ENCODE measurements at regions of chr4 and their contacts with region 1.

Region 1: GRCh38 chr4:82373816-82374625 is at the start of gene HNRNPD:
- DNase-seq: peak; percentile 99
- H3K4me3 ChIP-seq: peak within 1 kb of the TSS; percentile 99
- H3K27ac ChIP-seq: peak within 1 kb of the TSS; percentile 85
- H3K4me1 ChIP-seq: peaks cover 29% of the 10 kb centered on the region
- CTCF ChIP-seq: no peak
- total RNA-seq, gene HNRNPD: 127 and 159 TPM in 2 replicates

Region 2: DNA sequence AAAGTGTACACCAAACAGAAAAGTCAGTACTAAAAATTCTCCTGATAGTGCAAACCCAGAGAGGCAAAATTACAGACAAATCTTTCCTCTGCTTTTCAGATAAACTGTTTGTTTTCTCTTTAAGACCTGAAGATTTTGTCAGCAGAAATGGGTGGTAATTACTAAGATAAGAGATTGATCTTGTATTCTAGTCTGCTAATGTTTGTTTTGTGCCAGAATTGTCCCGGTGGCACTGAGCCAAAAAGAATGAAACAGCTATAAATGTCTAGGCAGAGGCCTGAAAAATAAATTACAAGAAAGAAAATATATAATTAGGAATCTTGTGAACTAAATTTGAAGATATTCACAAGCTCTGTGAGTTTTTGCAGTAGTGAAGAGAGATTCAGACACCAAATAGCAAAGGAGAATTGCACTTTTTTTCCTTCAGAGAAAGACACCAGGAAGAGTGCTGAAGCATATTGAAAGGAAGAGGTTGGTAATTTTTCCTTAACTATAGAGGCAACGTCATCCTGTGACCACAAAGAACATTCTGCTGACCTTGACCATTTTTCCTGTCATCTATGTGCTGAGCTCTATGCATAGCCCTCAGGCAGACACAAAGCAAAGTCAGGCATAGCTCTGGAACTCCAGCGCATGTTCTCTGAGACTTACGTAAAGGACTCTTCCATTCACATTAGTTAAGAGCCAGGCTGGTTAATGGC is 587.8 kb before region 1 on chr4:
- CTCF ChIA-PET with region 1: no interaction called
- POLR2A ChIA-PET with region 1: no interaction called
- intact Hi-C with region 1: no loop called
- DNase-seq: no peak
- H3K4me3 ChIP-seq: no peak overlapping the region
- H3K27ac ChIP-seq: no peak overlapping the region
- H3K4me1 ChIP-seq: no peaks in the 10 kb centered on the region
- CTCF ChIP-seq: no peak

Region 3: DNA sequence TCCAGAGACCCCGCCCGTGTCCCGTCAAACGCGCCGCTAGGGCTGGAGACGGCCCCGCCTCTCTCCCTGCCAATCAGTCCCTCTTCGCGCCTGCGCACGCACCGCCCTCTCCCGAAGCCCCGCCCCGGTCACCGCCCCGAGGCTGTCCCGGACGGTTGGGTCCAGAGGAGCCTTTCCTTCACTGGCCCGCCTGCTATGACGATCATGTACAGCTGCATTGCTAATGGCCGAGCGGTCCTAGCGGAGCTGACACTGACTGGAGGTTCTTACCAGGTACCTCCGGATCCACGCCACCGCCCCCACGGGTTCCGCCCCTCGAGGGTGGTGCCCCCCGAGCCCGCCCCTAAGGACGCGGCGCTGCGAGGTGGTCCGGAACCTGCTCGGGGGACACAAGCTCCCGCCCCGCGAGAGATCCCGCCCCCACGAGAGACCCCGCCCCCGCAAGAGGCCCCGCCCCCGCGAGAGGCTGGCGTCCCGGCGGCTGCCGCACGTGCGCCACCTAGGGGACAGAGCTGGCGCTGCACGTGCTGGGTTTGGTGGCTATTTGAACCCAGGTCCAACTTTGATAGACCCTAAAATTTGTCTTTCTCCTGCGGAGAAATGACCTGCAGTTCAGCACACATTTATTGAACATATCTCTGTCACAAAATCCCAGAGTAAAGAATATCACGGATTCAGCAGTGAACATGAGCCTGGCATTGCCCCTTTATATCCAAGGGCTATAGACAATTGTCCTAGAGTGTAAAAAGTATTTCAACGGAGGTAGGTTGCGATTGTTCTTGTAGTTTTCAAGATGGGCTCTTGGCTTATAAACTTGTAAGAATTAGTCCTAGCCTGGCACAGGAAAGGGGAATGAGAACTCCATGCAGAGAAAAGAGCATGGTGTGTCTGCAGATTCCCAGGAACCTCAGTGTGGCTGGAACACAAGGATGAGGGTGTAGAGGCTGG is 88.9 kb before region 1 on chr4:
- CTCF ChIA-PET with region 1: interaction called, 3 read pairs
- POLR2A ChIA-PET with region 1: no interaction called
- intact Hi-C with region 1: loop called (anchors 5 kb)
- DNase-seq: peak; percentile 99
- H3K4me3 ChIP-seq: peak overlapping the region; percentile 62
- H3K27ac ChIP-seq: peak overlapping the region; percentile 22
- H3K4me1 ChIP-seq: peaks cover 25% of the 10 kb centered on the region
- CTCF ChIP-seq: peak; percentile 89

Region 4: DNA sequence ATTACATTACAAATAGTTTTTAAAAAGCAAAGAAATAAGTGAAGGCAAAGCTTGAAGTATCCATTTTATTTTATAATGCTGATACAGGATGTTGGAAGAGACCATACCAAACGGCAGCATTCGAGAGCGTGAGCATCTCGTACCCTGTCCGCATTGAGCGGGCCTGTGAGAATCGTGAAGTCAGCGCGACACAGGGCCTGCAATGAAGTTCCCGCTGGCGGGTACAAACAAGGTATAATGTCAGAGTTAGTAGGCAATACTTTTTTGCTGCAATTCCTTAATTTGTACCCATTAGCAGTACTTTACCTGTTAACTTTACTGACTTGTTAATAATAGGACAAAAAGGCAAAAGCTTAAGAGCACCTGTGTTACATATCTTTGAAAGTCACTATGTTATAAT is 19.2 kb before region 1 on chr4:
- CTCF ChIA-PET with region 1: no interaction called
- POLR2A ChIA-PET with region 1: interaction called, 15 read pairs
- intact Hi-C with region 1: no loop called
- DNase-seq: no peak
- H3K4me3 ChIP-seq: no peak overlapping the region
- H3K27ac ChIP-seq: no peak overlapping the region
- H3K4me1 ChIP-seq: no peaks in the 10 kb centered on the region
- CTCF ChIP-seq: no peak

Region 5: GRCh38 chr4:82428969-82429727 is 55.1 kb after region 1 on chr4:
- CTCF ChIA-PET with region 1: interaction called, 3 read pairs
- POLR2A ChIA-PET with region 1: interaction called, 8 read pairs
- intact Hi-C with region 1: loop called (anchors 1 kb)
- DNase-seq: peak; percentile 92
- H3K4me3 ChIP-seq: peak overlapping the region; percentile 99
- H3K27ac ChIP-seq: peak overlapping the region; percentile 90
- H3K4me1 ChIP-seq: peaks cover 53% of the 10 kb centered on the region
- CTCF ChIP-seq: peak; percentile 84

Region 6: GRCh38 chr4:82900331-82901128 is 526.5 kb after region 1 on chr4 and contains the start of gene THAP9:
- CTCF ChIA-PET with region 1: no interaction called
- POLR2A ChIA-PET with region 1: no interaction called
- intact Hi-C with region 1: loop called (anchors 2 kb)
- DNase-seq: peak; percentile 99
- H3K4me3 ChIP-seq: peak within 1 kb of the TSS; percentile 85
- H3K27ac ChIP-seq: peak within 1 kb of the TSS; percentile 87
- H3K4me1 ChIP-seq: peaks cover 42% of the 10 kb centered on the region
- CTCF ChIP-seq: no peak
- total RNA-seq, gene THAP9: 13.2 and 16.4 TPM in 2 replicates

Measured in OCI-LY7 (cell line).